Activated CD8-positive, alpha-beta T cell treated with anti-CD3 and anti-CD28 coated beads for 36 hours (primary cell): ENCODE measurements at regions of chr2 and their contacts with region 1.

Region 1: GRCh38 chr2:84870306-84870705 is 10.6 kb downstream of the TRABD2A start:
- DNase-seq: no peak
- ATAC-seq: no peak
- H3K4me3 Mint-ChIP-seq: no peak overlapping the region
- H3K27ac Mint-ChIP-seq: peak overlapping the region; percentile 37
- H3K4me1 Mint-ChIP-seq: peaks cover 77% of the 10 kb centered on the region
- H3K27me3 Mint-ChIP-seq: no peaks in the 10 kb centered on the region
- CTCF ChIP-seq: no peak

Region 2: DNA sequence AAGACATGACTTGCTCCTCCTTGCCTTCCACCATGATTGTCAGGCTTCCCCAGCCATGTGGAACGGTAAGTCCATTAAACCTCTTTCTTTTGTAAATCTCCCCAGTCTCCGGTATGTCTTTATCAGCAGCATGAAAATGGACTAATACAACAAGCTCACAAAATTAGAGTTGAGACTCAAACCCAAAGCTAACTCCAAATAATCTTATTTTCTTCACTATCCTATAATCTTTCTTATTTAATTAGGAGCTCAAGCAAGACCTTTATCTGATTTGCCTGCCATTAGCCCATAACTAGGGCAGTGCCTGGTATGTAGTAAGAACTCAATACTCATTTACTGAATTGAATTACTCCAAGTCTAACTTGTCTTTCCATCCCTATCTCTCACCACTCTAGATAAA is 700.4 kb before region 1 on chr2:
- CTCF ChIA-PET with region 1: no interaction called
- POLR2A ChIA-PET with region 1: no interaction called
- intact Hi-C with region 1: no loop called
- DNase-seq: no peak
- ATAC-seq: no peak
- H3K4me3 Mint-ChIP-seq: no peak overlapping the region
- H3K27ac Mint-ChIP-seq: no peak overlapping the region
- H3K4me1 Mint-ChIP-seq: no peaks in the 10 kb centered on the region
- H3K27me3 Mint-ChIP-seq: peaks cover 11% of the 10 kb centered on the region
- CTCF ChIP-seq: no peak

Region 3: DNA sequence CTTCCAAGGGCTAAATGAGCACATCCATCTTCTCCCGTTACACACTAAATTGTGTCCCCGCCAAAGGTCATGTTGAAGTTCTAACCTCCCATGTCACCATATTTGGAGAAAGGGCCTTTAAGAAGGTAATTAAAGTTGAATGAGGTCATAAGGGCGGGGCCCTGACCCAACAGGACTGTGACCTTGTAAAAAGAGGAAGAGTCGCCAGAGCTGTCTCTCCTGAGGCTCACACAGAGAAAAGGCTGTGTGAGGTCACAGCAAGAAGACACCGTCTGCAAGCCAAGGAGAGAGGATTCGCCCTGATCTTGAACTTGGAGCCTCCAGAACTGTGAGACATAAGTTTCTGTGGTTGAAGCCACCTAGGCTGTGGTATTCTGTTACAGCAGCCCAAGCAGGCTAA is 13.5 kb before region 1 on chr2:
- CTCF ChIA-PET with region 1: interaction called, 10 read pairs
- POLR2A ChIA-PET with region 1: interaction called, 8 read pairs
- intact Hi-C with region 1: no loop called
- DNase-seq: peak; percentile 76
- ATAC-seq: peak; percentile 82
- H3K4me3 Mint-ChIP-seq: peak overlapping the region; percentile 49
- H3K27ac Mint-ChIP-seq: peak overlapping the region; percentile 93
- H3K4me1 Mint-ChIP-seq: peaks cover 93% of the 10 kb centered on the region
- H3K27me3 Mint-ChIP-seq: no peaks in the 10 kb centered on the region
- CTCF ChIP-seq: no peak